Activated B cell treated with CpG ODN at 0.5 μM for 24 hours (primary cell): ENCODE measurements at regions of chr19 and their contacts with region 1.

Region 1: DNA sequence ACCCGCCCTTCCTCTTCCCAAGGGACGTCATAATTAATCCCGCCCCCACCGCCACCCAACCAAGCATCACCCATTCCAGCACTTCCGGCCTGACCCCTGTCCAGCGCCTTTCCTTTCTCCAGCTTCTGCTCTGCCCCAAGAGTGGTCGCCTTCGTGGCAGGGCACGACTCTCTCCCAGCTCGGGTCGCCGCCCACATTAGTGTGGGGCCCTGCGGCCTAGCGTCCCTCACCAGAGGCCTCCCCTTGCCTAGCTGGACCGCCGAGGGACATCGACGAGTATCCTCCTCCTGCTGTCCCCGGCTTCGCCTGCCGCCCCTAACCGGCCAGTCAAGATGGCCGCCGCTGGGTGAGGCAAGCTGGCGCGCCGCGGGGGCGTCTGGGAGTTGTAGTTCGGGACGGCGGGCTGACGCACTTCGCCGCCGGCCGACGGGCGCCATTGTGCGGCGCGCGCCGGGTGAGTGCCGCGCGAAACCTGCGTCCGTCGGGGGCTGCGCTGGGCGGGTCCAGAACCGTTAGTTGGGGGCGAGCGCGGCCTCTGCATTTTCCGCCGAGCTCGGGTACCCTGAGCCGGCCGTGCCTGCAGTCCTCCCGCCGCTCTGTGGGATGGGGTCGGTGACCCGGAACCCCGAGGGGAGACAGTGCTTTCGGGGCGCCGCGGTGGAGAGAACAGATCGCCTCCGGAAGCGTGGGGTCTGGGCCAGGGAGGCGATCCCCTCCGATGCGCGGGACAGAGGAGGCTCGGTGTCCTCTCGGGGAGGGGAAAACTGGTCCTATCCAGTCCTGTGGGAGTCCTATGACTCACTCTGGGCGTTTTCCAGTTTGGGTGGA is at the start of gene ZNF274:
- DNase-seq: peak; percentile 93
- ATAC-seq: peak; percentile 84
- H3K4me3 Mint-ChIP-seq: peak within 1 kb of the TSS; percentile 92
- H3K27ac Mint-ChIP-seq: peak within 1 kb of the TSS; percentile 98
- H3K4me1 Mint-ChIP-seq: peaks cover 24% of the 10 kb centered on the region
- H3K27me3 Mint-ChIP-seq: no peaks in the 10 kb centered on the region
- CTCF ChIP-seq: no peak
- total RNA-seq, gene ZNF274: 47.2 and 50.3 TPM in 2 replicates

Region 2: DNA sequence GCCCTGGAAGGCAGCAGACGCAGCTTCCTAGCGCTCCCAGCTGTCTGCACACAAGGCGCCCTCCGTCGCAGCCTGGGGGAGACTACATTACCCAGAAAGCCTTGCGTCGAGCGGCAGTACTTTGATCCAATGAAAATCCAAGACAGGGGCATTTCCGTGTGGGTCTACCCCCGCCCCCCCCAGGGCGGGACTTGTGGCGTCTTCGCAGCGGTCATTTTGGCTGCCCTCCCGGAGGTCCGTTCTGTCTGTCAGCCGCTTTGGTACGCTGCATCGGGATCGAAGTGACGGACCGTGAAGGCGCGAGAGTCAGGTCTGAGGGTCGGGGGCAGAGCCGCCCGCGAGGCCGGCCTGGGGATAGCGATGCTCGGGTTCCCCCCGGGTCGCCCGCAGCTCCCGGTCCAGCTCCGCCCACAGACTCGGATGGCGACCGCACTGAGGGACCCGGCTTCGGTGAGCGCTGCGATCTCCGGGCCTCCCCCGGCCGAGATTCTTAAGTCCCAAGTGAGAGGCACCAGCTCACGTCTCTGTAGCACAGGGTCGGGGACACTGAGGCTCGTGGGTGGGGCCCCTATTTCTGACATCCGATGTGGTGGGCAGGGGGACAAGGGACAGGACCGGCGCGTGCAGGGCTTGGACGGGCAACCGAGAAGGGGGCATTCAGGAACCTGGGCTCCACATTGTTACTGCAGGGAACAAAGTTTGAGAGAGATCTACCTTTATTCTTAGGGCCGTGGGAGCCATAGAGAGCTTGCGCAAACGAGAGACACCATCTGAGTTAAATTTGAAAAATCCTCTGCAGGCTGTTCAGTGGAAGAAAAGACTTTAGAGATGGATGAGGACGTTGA is 550.0 kb before region 1 on chr19 and contains the start of gene ZNF211:
- CTCF ChIA-PET with region 1: no interaction called
- POLR2A ChIA-PET with region 1: no interaction called
- intact Hi-C with region 1: loop called (anchors 2 kb)
- DNase-seq: peak; percentile 81
- ATAC-seq: peak; percentile 100
- H3K4me3 Mint-ChIP-seq: peak within 1 kb of the TSS; percentile 94
- H3K27ac Mint-ChIP-seq: peak within 1 kb of the TSS; percentile 87
- H3K4me1 Mint-ChIP-seq: peaks cover 19% of the 10 kb centered on the region
- H3K27me3 Mint-ChIP-seq: no peaks in the 10 kb centered on the region
- CTCF ChIP-seq: no peak
- total RNA-seq, gene ZNF211: 22.0 and 26.0 TPM in 2 replicates

Region 3: GRCh38 chr19:58097781-58098681 is 85.2 kb before region 1 on chr19 and contains the start of gene ZSCAN18:
- CTCF ChIA-PET with region 1: no interaction called
- POLR2A ChIA-PET with region 1: interaction called, 3 read pairs
- intact Hi-C with region 1: loop called (anchors 1 kb)
- DNase-seq: peak; percentile 98
- ATAC-seq: peak; percentile 93
- H3K4me3 Mint-ChIP-seq: peak within 1 kb of the TSS; percentile 90
- H3K27ac Mint-ChIP-seq: peak within 1 kb of the TSS; percentile 100
- H3K4me1 Mint-ChIP-seq: peaks cover 18% of the 10 kb centered on the region
- H3K27me3 Mint-ChIP-seq: no peaks in the 10 kb centered on the region
- CTCF ChIP-seq: no peak
- total RNA-seq, gene ZSCAN18: 40.8 and 49.8 TPM in 2 replicates

Region 4: DNA sequence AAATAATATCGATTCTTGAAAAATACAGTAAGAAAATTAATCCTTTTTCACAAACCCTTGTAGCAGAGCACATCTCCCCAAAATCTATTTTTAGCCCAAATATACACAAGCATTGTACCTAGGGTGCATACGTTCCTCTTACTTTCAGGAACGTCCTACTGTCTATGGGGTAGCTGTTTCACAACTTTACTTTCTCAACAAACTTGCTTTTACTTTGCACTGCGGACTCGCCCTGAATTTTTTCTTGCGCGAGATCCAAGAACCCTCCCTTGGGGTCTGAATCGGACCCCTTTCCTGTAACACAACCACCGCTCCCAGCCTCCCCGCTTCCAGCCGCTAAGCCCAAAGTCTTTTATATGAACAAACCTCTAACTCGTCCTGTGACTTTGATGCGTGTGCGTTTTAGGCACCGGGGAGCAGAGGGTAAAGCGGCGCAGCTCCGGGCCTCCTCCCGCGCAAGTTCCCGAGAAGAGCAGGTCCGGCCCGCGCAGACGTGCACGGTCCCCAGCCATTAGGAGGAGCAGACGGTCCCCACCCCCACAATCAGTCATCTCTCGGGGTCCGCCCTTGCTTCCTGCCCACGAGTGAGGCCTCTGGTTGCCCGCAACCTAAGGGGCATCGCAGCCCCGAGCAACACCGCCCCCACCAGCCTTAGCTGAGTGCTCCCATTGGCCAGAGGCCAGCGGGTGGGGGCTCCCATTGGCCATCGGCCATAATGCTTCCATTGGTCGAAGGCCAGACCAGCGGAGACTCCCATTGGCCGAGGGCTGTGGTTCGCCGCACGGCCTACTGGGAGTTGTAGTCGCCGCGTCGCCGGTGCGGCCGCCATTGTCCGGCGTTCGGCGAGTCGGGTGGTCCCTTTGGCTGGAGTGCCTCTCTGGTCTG is 95.2 kb after region 1 on chr19 and contains the start of gene ZNF8:
- CTCF ChIA-PET with region 1: no interaction called
- POLR2A ChIA-PET with region 1: interaction called, 16 read pairs
- intact Hi-C with region 1: loop called (anchors 1 kb)
- DNase-seq: peak; percentile 88
- ATAC-seq: peak; percentile 98
- H3K4me3 Mint-ChIP-seq: peak within 1 kb of the TSS; percentile 91
- H3K27ac Mint-ChIP-seq: peak within 1 kb of the TSS; percentile 95
- H3K4me1 Mint-ChIP-seq: peaks cover 44% of the 10 kb centered on the region
- H3K27me3 Mint-ChIP-seq: no peaks in the 10 kb centered on the region
- CTCF ChIP-seq: no peak
- total RNA-seq, gene ZNF8: 4.7 and 5.3 TPM in 2 replicates

Region 5: GRCh38 chr19:58362272-58362994 is 179.2 kb after region 1 on chr19 and contains the start of gene ZNF497:
- CTCF ChIA-PET with region 1: no interaction called
- POLR2A ChIA-PET with region 1: interaction called, 34 read pairs
- intact Hi-C with region 1: no loop called
- DNase-seq: peak; percentile 98
- ATAC-seq: peak; percentile 86
- H3K4me3 Mint-ChIP-seq: peak within 1 kb of the TSS; percentile 95
- H3K27ac Mint-ChIP-seq: peak within 1 kb of the TSS; percentile 97
- H3K4me1 Mint-ChIP-seq: peaks cover 21% of the 10 kb centered on the region
- H3K27me3 Mint-ChIP-seq: peaks cover 2% of the 10 kb centered on the region
- CTCF ChIP-seq: no peak
- total RNA-seq, gene ZNF497: 1.7 and 2.1 TPM in 2 replicates

Region 6: DNA sequence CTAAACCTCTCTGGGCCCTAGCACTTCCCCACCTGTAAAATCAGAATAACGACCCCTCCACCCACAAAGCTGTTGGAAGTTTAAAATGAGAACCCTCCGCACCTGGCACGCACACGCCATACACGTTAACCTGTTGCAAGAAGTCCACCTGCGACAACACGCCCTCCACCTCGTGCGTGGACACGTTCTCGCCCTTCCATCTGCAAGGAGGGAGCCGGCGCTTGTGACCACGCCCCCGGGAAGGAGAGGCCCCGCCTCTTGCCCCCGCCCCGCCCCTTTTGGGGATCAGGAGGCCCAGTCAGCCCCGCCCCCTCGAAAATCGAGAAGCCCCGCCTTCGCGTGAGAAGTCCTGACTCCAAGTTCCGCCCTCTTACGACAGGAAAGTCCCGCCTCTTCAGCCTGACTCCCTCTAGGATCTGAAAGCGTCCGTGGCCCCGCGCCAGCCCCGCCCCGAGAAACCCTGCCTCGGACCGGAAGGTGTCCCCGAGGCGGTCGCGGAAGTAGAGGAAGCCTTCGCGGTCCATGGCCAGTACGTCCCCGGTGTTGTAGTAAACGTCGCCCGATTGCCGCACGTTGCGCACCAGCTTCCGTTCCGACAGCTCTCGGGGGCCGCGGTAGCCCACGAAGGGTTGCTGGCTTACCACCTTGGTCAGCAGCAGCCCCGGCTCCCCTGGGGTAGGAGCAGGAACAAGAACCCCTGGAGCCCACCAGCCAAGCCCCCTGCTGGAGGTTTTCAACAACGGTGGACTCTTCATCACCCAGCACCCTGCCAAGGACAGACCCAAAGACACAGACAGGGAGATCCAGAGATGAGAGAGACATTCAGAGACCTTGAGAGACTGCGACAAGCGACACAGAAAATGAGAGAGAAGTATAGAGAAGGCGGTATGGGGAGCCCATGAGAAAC is 316.1 kb after region 1 on chr19:
- CTCF ChIA-PET with region 1: no interaction called
- POLR2A ChIA-PET with region 1: no interaction called
- intact Hi-C with region 1: loop called (anchors 1 kb)
- DNase-seq: peak; percentile 89
- ATAC-seq: peak; percentile 92
- H3K4me3 Mint-ChIP-seq: peak overlapping the region; percentile 92
- H3K27ac Mint-ChIP-seq: peak overlapping the region; percentile 90
- H3K4me1 Mint-ChIP-seq: peaks cover 24% of the 10 kb centered on the region
- H3K27me3 Mint-ChIP-seq: no peaks in the 10 kb centered on the region
- CTCF ChIP-seq: no peak